Astrocyte of the cerebellum (primary cell): ENCODE measurements at regions of chr2 and their contacts with region 1.

Region 1: GRCh38 chr2:148161909-148162435 is 141.1 kb downstream of the MBD5 start:
- DNase-seq: no peak
- H3K4me3 ChIP-seq: no peak overlapping the region
- CTCF ChIP-seq: no peak

Region 2: GRCh38 chr2:147689220-147689909 is 472.6 kb before region 1 on chr2:
- in situ Hi-C with region 1: no loop called
- DNase-seq: no peak
- H3K4me3 ChIP-seq: no peak overlapping the region
- CTCF ChIP-seq: no peak

Region 3: DNA sequence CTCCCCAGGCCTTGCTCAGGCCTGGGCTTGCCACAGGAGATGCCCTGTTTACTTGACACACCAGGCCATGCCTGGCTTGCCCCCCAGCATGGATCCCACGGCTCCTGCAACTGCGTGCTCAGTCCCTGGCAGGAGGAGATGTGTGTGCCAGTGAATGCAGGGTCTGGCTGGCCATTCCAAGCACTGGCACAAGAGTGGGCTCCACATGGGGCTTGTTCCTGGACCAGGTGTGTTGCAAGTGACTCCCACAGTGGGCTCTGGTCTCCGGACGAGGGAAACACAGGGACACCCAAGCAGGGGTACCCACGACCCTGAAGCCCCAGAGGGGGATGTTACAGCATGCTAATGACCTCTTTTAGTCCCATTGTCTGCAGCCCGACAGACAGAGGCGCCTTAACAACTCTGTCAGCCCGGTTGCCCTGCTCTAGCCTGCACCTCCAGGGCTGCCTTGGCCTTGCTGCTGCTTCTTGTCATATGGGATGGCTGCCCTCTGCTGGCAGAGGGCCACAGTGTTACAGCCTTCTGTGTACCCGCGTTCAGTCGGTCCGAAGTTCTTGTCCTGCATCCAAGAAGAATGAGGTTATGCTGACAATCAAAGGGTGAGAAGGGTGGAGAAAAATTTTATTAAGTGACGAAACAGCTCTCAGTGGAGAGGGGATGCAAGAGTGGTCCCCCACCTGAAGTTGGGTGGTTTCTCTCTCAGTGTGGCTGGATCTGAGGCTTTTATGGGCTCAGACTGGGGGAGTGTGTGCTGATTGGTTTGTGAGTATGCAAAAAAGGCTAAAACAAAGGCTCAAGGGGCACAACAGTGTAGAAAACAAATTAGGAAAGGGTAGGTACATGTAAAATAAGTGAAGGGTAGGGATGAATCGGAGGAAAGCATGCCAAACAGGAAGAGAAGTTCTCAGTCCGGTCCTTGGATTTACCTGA is 39.4 kb after region 1 on chr2:
- in situ Hi-C with region 1: no loop called
- DNase-seq: no peak
- H3K4me3 ChIP-seq: no peak overlapping the region
- CTCF ChIP-seq: peak; percentile 19

Region 4: GRCh38 chr2:148218326-148219075 is 56.5 kb after region 1 on chr2:
- in situ Hi-C with region 1: loop called (anchors 5 kb)
- DNase-seq: no peak
- H3K4me3 ChIP-seq: no peak overlapping the region
- CTCF ChIP-seq: no peak